AG04449 (cell line): ENCODE measurements at regions of chr11 and their contacts with region 1.

Region 1: GRCh38 chr11:406978-407739 is 7.6 kb downstream of the SIGIRR start:
- DNase-seq: no peak
- H3K4me3 ChIP-seq: peak overlapping the region; percentile 67
- CTCF ChIP-seq: no peak

Region 2: GRCh38 chr11:396948-397548 is 10.1 kb before region 1 on chr11:
- CTCF ChIA-PET with region 1: interaction called, 23 read pairs
- POLR2A ChIA-PET with region 1: interaction called, 7 read pairs
- DNase-seq: no peak
- H3K4me3 ChIP-seq: peak overlapping the region; percentile 29; the same call in 1 of the 2 replicates
- CTCF ChIP-seq: peak; percentile 71

Region 3: GRCh38 chr11:587978-588380 is 180.8 kb after region 1 on chr11:
- CTCF ChIA-PET with region 1: no interaction called
- POLR2A ChIA-PET with region 1: no interaction called
- DNase-seq: no peak
- H3K4me3 ChIP-seq: no peak overlapping the region
- CTCF ChIP-seq: no peak